Activated B cell treated with CpG ODN at 0.5 μM for 24 hours (primary cell): ENCODE measurements at regions of chr7 and their contacts with region 1.

Region 1: GRCh38 chr7:149624419-149625339 is 127.1 kb upstream of the ZNF746 start:
- DNase-seq: peak; percentile 95
- ATAC-seq: peak; percentile 92
- H3K4me3 Mint-ChIP-seq: peak overlapping the region; percentile 90
- H3K27ac Mint-ChIP-seq: peak overlapping the region; percentile 80
- H3K4me1 Mint-ChIP-seq: peaks cover 43% of the 10 kb centered on the region
- H3K27me3 Mint-ChIP-seq: peaks cover 5% of the 10 kb centered on the region
- CTCF ChIP-seq: peak; percentile 87

Region 2: GRCh38 chr7:149239345-149240191 is 385.1 kb before region 1 on chr7 and contains the start of gene ZNF212:
- CTCF ChIA-PET with region 1: no interaction called
- POLR2A ChIA-PET with region 1: no interaction called
- intact Hi-C with region 1: loop called (anchors 1 kb)
- DNase-seq: peak; percentile 82
- ATAC-seq: peak; percentile 99
- H3K4me3 Mint-ChIP-seq: peak within 1 kb of the TSS; percentile 91
- H3K27ac Mint-ChIP-seq: peak within 1 kb of the TSS; percentile 76
- H3K4me1 Mint-ChIP-seq: peaks cover 37% of the 10 kb centered on the region
- H3K27me3 Mint-ChIP-seq: no peaks in the 10 kb centered on the region
- CTCF ChIP-seq: no peak
- total RNA-seq, gene ZNF212: 17.0 and 21.0 TPM in 2 replicates

Region 3: DNA sequence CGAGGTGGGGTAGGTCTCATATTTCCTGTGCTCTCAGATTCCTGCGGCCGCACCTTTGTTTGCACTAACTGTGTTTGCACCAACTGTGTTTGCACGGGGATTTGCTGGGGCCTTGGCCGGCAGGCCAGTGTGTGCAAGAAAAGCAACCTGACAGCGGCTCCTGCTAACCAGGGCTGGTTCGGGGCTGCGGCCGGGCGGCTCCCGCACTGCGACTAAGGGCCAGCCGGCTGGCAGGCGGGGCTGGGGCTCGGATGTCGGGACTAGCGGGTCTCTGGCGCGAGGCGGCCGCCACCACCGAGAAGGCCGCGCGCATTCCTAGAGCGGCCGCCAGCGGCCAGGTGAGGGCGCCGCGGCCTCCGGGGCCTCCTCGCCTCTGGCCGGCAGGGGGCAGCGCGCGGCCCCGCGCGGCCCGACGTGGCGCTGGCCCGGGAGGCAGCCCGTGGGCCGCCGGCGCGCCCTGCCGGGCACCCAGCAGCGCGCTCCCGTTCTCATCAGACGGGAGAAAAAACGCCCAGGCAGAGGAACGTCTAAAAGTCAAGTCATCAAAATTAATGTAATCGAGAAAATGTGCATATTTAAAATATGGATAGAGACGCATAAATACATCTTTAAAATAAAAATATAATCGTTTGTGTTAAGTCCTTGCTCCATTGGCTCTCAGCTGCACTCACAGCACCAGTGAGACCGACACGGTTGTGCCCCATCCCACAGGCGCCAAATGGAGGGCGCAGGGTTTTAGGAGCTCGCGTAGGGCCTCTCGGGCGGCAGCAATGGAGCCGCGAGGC is 202.4 kb before region 1 on chr7:
- CTCF ChIA-PET with region 1: interaction called, 6 read pairs
- POLR2A ChIA-PET with region 1: interaction called, 3 read pairs
- intact Hi-C with region 1: loop called (anchors 1 kb)
- DNase-seq: peak; percentile 79
- ATAC-seq: peak; percentile 98
- H3K4me3 Mint-ChIP-seq: peak overlapping the region; percentile 84
- H3K27ac Mint-ChIP-seq: peak overlapping the region; percentile 74
- H3K4me1 Mint-ChIP-seq: peaks cover 8% of the 10 kb centered on the region
- H3K27me3 Mint-ChIP-seq: no peaks in the 10 kb centered on the region
- CTCF ChIP-seq: no peak

Region 4: GRCh38 chr7:149509774-149510173 is 114.9 kb before region 1 on chr7:
- CTCF ChIA-PET with region 1: no interaction called
- POLR2A ChIA-PET with region 1: no interaction called
- intact Hi-C with region 1: no loop called
- DNase-seq: no peak
- ATAC-seq: no peak
- H3K4me3 Mint-ChIP-seq: no peak overlapping the region
- H3K27ac Mint-ChIP-seq: no peak overlapping the region
- H3K4me1 Mint-ChIP-seq: no peaks in the 10 kb centered on the region
- H3K27me3 Mint-ChIP-seq: no peaks in the 10 kb centered on the region
- CTCF ChIP-seq: no peak

Region 5: DNA sequence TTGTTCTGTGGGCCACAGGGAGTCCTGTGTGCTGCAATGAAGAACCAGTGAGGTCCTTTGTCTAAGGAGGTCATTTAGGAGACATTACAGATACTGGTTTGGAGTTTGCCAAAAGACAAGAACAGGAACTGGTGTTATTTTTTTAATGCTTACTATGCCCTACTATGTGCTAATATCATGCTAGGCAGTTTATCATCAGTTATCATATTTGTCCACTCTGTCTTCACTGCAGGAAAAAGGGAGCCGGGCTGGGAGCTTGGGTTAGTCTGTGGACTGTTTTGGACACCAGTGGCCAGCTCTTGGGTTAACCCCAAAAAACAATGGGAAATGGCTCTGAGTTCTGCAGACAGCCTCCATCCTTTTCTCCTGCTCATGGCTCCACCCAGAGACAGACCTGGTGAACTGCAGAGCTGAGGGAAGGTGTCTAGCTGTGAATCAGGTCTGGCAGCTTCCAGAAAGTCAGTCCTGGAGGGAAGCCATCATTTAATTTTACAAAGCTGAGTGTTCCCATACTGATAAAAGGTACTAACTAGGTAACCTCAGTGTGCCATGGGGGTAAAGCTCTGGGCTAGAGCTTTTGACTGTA is 25.9 kb before region 1 on chr7:
- CTCF ChIA-PET with region 1: no interaction called
- POLR2A ChIA-PET with region 1: no interaction called
- intact Hi-C with region 1: loop called (anchors 1 kb)
- DNase-seq: no peak
- ATAC-seq: no peak
- H3K4me3 Mint-ChIP-seq: no peak overlapping the region
- H3K27ac Mint-ChIP-seq: peak overlapping the region; percentile 79
- H3K4me1 Mint-ChIP-seq: peaks cover 30% of the 10 kb centered on the region
- H3K27me3 Mint-ChIP-seq: no peaks in the 10 kb centered on the region
- CTCF ChIP-seq: no peak

Region 6: DNA sequence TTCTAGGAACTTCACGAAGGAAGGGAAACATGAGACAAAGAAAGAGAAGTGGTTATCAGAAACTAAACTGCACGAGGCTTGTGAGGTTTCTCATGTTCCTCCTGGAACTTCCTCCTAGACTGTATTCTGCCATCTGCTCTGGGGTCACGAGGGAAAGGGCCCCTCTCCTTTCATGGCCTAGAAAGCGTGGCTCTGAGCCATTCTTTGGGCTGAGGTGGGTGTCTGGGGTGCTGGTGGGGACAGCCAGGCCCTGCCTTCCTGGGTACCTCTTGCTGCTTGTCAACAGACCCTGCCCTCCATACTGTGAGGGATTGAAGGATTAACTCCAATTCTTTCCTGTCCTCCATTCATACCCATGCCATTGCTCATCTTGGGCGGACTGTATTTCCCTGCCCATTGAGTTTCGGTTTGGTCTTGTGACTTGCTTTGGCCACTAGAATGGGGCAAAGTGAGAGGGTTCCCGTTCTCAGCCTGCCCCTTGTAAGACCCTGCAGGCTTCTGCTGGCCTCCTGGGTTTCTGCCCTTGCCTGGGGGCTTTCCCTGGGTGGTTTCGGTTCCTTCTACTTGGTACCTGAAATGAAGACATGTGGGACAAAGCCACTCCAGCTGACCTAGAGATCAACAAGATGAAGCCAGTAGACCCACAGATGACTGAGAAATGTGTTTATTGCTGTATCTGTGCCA is 810.9 kb after region 1 on chr7:
- CTCF ChIA-PET with region 1: no interaction called
- POLR2A ChIA-PET with region 1: no interaction called
- intact Hi-C with region 1: loop called (anchors 10 kb)
- DNase-seq: peak; percentile 74
- ATAC-seq: peak; percentile 92
- H3K4me3 Mint-ChIP-seq: peak overlapping the region; percentile 73
- H3K27ac Mint-ChIP-seq: peak overlapping the region; percentile 96
- H3K4me1 Mint-ChIP-seq: peaks cover 63% of the 10 kb centered on the region
- H3K27me3 Mint-ChIP-seq: peaks cover 2% of the 10 kb centered on the region
- CTCF ChIP-seq: no peak